Activated CD8-positive, alpha-beta T cell treated with anti-CD3 and anti-CD28 coated beads for 36 hours (primary cell): ENCODE measurements at regions of chr2 and their contacts with region 1.

Region 1: GRCh38 chr2:55223958-55224760 is 7.9 kb downstream of the CLHC1 start:
- DNase-seq: no peak
- ATAC-seq: no peak
- H3K4me3 Mint-ChIP-seq: peak overlapping the region; percentile 67
- H3K27ac Mint-ChIP-seq: peak overlapping the region; percentile 83
- H3K4me1 Mint-ChIP-seq: peaks cover 37% of the 10 kb centered on the region
- H3K27me3 Mint-ChIP-seq: no peaks in the 10 kb centered on the region
- CTCF ChIP-seq: no peak

Region 2: GRCh38 chr2:54570925-54571694 is 653.0 kb before region 1 on chr2:
- CTCF ChIA-PET with region 1: no interaction called
- POLR2A ChIA-PET with region 1: no interaction called
- intact Hi-C with region 1: loop called (anchors 10 kb)
- DNase-seq: peak; percentile 89
- ATAC-seq: peak; percentile 37
- H3K4me3 Mint-ChIP-seq: peak overlapping the region; percentile 43
- H3K27ac Mint-ChIP-seq: peak overlapping the region; percentile 96
- H3K4me1 Mint-ChIP-seq: peaks cover 86% of the 10 kb centered on the region
- H3K27me3 Mint-ChIP-seq: no peaks in the 10 kb centered on the region
- CTCF ChIP-seq: no peak

Region 3: GRCh38 chr2:55010149-55010591 is 214.0 kb before region 1 on chr2:
- CTCF ChIA-PET with region 1: interaction called, 5 read pairs
- POLR2A ChIA-PET with region 1: interaction called, 3 read pairs
- intact Hi-C with region 1: loop called (anchors 10 kb)
- DNase-seq: peak; percentile 46
- ATAC-seq: peak; percentile 95
- H3K4me3 Mint-ChIP-seq: peak overlapping the region; percentile 75
- H3K27ac Mint-ChIP-seq: peak overlapping the region; percentile 84
- H3K4me1 Mint-ChIP-seq: peaks cover 66% of the 10 kb centered on the region
- H3K27me3 Mint-ChIP-seq: no peaks in the 10 kb centered on the region
- CTCF ChIP-seq: no peak

Region 4: GRCh38 chr2:55120634-55121359 is 103.4 kb before region 1 on chr2:
- CTCF ChIA-PET with region 1: no interaction called
- POLR2A ChIA-PET with region 1: no interaction called
- intact Hi-C with region 1: no loop called
- DNase-seq: no peak
- ATAC-seq: no peak
- H3K4me3 Mint-ChIP-seq: no peak overlapping the region
- H3K27ac Mint-ChIP-seq: no peak overlapping the region
- H3K4me1 Mint-ChIP-seq: peaks cover under 1% of the 10 kb centered on the region
- H3K27me3 Mint-ChIP-seq: no peaks in the 10 kb centered on the region
- CTCF ChIP-seq: no peak

Region 5: DNA sequence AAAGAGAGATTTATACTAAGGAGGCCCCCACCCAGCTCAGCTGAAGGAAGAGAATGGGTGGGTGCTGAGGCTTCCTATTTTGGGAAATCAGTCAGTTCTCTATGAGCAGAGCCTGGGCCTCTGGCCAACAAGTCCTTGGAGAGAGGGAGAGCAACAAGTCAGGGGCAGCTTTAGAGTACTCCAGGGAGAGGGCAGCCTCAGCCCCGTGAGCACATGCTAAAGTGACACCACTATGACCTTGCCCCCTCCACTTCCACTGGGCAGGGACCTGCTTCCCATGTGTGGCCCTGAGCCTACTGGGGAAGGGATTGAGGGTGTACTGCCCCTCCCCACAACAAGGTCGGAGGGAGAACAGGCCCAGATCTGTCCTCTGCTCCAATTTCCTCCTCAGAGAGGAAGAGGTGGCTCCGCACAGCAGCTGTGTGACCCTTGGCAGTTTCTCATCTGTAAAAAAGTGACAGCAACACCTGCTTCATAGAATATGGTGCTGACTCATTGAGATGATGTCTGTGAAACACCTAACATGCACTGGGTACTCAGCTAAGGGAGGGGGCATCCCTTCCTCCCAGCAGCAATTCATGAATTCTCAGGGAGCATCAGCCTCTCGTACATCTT is 65.0 kb before region 1 on chr2:
- CTCF ChIA-PET with region 1: no interaction called
- POLR2A ChIA-PET with region 1: no interaction called
- intact Hi-C with region 1: no loop called
- DNase-seq: no peak
- ATAC-seq: peak; percentile 45
- H3K4me3 Mint-ChIP-seq: no peak overlapping the region
- H3K27ac Mint-ChIP-seq: no peak overlapping the region
- H3K4me1 Mint-ChIP-seq: peaks cover 4% of the 10 kb centered on the region
- H3K27me3 Mint-ChIP-seq: peaks cover 1% of the 10 kb centered on the region
- CTCF ChIP-seq: no peak